Mammary epithelial cell (primary cell): ENCODE measurements at regions of chr7 and their contacts with region 1.

Region 1: GRCh38 chr7:87876040-87876868 is at the starts of genes DBF4 and SLC25A40:
- DNase-seq: peak; percentile 97
- H3K4me3 ChIP-seq: peak within 1 kb of the TSS; percentile 81 to 91 (median 87)
- H3K27ac ChIP-seq: peak within 1 kb of the TSS; percentile 89
- H3K4me1 ChIP-seq: peaks cover 14% of the 10 kb centered on the region
- H3K27me3 ChIP-seq: no peaks in the 10 kb centered on the region
- CTCF ChIP-seq: no peak
- total RNA-seq, gene DBF4: 11.2 to 29.3 TPM
- total RNA-seq, gene SLC25A40: 9.5 to 14.1 TPM

Region 2: DNA sequence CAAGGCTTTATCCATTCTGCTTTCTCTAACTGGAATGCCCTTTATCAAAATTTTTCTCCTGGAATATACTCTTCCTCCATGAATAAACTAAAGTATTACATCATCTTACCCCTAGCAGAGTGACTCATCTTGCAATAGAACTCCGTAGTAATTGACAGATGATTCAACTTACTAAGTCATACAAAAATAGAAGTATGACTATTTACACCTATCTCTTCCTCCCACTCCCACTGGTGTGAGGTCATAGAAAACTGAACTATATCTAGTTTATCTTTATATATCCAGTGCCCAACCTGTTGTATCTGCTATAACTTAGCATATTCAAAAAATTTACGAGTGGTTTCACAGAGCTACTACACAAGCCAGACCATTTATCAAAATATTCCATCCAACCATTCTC is 301.6 kb before region 1 on chr7:
- CTCF ChIA-PET with region 1: no interaction called
- dilution Hi-C with region 1: no loop called
- in situ Hi-C with region 1: no loop called
- intact Hi-C with region 1: loop called (anchors 2 kb)
- DNase-seq: peak; percentile 58
- H3K4me3 ChIP-seq: no peak overlapping the region
- H3K27ac ChIP-seq: no peak overlapping the region
- H3K4me1 ChIP-seq: peaks cover 3% of the 10 kb centered on the region
- H3K27me3 ChIP-seq: no peaks in the 10 kb centered on the region
- CTCF ChIP-seq: no peak

Region 3: DNA sequence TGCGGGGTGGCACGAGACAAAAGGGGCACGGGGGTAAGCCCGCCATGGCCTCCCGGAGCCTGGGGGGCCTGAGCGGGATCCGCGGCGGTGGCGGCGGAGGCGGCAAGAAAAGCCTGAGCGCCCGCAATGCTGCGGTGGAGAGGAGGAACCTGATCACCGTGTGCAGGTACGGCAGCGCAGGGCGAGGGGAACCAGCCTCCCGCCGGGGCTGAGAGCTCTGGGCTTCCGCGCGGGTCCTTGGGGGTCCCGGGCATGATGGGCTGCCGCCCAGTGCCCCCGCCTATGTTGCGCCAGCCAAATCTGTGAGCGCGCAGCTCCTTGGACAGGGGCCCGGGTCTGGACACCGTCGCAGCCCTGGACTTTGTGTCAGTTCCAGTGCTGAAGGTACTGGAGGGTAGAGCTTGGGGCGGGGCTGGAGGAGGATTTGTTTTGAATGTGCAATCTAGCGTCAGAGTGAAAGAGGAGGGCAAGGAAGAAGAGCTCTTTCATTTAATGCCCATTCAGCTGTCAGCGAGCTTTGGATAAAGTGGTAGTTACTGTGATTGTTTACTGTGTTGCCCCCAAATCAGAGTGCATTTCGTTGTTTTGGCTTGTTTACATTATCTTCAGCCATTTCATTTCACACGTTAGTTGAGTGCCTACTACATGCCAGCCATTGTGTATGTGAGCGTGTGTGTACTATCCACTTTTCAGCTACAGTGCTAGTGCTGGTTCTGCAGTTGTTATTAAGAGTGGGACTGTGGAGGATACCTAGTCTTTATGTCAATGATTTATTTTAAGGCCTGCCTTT is 247.3 kb before region 1 on chr7:
- CTCF ChIA-PET with region 1: no interaction called
- dilution Hi-C with region 1: no loop called
- in situ Hi-C with region 1: no loop called
- intact Hi-C with region 1: loop called (anchors 2 kb)
- DNase-seq: peak; percentile 49
- H3K4me3 ChIP-seq: peak overlapping the region; percentile 76 to 82 (median 81)
- H3K27ac ChIP-seq: no peak overlapping the region
- H3K4me1 ChIP-seq: peaks cover 18% of the 10 kb centered on the region
- H3K27me3 ChIP-seq: no peaks in the 10 kb centered on the region
- CTCF ChIP-seq: no peak

Region 4: DNA sequence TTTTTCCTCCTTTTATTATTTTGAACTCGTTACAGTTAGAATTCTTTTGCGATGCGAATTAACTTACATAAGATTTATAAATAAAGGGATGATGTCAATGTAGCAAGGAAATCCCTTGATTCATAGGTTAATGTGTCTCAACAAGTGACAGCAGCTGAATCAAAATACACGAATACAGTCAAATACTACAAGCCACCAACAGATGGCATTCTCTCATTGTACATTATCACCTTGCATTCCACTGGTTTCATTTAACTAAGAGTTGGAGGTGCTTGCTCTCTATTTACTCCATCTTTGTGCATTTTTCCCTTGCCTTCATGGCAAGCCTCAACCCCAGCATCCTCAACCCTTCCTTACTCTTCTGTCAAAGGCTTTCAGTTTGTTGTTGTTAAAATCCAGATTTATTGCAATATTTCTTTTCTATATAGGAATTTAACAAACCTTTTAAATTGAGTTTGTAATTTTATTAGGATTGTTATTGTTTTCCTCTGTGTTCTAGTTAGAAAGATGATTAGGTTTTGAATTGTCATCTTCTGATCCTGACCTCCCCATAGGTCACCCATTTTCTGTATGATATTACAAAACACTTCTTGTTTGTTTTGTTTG is 78.4 kb before region 1 on chr7:
- CTCF ChIA-PET with region 1: interaction called, 5 read pairs
- dilution Hi-C with region 1: no loop called
- in situ Hi-C with region 1: loop called in 1 of 2 experiments (anchors 10 kb)
- intact Hi-C with region 1: loop called (anchors 2 kb)
- DNase-seq: peak; percentile 68
- H3K4me3 ChIP-seq: no peak overlapping the region
- H3K27ac ChIP-seq: no peak overlapping the region
- H3K4me1 ChIP-seq: no peaks in the 10 kb centered on the region
- H3K27me3 ChIP-seq: no peaks in the 10 kb centered on the region
- CTCF ChIP-seq: peak; percentile 62 to 70

Region 5: GRCh38 chr7:87850836-87851593 is 25.2 kb before region 1 on chr7:
- CTCF ChIA-PET with region 1: interaction called, 3 read pairs
- dilution Hi-C with region 1: no loop called
- in situ Hi-C with region 1: no loop called
- intact Hi-C with region 1: loop called (anchors 2 kb)
- DNase-seq: no peak
- H3K4me3 ChIP-seq: no peak overlapping the region
- H3K27ac ChIP-seq: no peak overlapping the region
- H3K4me1 ChIP-seq: peaks cover 4% of the 10 kb centered on the region
- H3K27me3 ChIP-seq: no peaks in the 10 kb centered on the region
- CTCF ChIP-seq: no peak

Region 6: DNA sequence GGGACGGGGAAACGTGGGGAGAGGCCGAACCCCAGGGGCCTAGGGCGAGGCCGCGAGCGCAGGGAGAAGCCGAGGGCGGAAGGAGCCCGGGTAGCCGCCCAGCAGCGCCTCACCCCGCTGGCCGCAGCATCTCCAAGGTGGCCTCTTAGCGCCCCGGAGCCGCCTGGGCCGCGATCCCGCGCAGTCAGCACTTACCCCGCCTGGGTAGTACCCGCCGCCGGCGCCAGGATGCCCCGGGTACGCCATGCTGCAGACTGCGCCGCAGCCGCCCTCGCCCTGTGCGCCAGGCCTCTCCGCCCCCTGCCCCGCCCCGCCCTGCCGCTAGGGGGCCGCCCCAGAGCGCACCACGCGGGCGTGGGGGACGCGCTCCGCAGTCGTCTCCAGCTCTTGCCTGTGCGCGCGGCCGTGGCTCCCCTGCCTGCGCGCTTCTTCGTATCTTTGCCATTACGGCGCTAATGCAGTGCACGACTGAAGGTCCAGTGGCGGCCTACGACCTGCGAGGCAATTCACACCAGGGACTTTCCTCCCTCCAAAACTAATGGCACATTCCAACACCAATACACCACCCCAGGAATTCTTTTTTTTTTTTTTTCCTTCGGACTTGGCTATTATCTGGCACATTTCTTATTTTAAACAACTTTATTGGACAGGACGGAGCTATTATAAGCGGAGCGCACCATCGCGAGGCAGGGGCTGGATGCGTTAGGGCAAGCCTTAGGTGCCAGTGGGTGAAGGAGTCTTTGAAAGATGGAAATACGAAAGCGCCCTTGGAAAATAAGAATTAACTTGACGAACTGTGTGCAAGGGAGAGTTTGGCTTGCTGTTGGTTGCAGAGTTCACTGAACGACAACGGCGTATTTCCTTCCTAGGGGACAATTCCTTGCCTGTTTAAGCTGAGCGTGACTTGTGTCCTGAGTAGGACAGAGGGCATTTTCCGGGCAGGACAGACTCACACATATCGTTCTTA is 343.8 kb after region 1 on chr7 and contains the start of gene SRI:
- CTCF ChIA-PET with region 1: no interaction called
- dilution Hi-C with region 1: no loop called
- in situ Hi-C with region 1: no loop called
- intact Hi-C with region 1: loop called (anchors 10 kb)
- DNase-seq: peak; percentile 85
- H3K4me3 ChIP-seq: peak within 1 kb of the TSS; percentile 94 to 99 (median 97)
- H3K27ac ChIP-seq: peak within 1 kb of the TSS; percentile 92
- H3K4me1 ChIP-seq: peaks cover 37% of the 10 kb centered on the region
- H3K27me3 ChIP-seq: no peaks in the 10 kb centered on the region
- CTCF ChIP-seq: peak; percentile 25 to 63
- total RNA-seq, gene SRI: 78.0 to 183 TPM

Region 7: GRCh38 chr7:88357781-88358525 is 481.7 kb after region 1 on chr7:
- CTCF ChIA-PET with region 1: no interaction called
- dilution Hi-C with region 1: no loop called
- in situ Hi-C with region 1: no loop called
- intact Hi-C with region 1: loop called (anchors 10 kb)
- DNase-seq: peak; percentile 36
- H3K4me3 ChIP-seq: peak overlapping the region in 2 of 3 experiments; percentile 6 to 18
- H3K27ac ChIP-seq: peak overlapping the region; percentile 25
- H3K4me1 ChIP-seq: peaks cover 6% of the 10 kb centered on the region
- H3K27me3 ChIP-seq: no peaks in the 10 kb centered on the region
- CTCF ChIP-seq: peak; percentile 72 to 82